ENCODE measurements at regions of chr3 and their contacts with region 1.

Region 1: DNA sequence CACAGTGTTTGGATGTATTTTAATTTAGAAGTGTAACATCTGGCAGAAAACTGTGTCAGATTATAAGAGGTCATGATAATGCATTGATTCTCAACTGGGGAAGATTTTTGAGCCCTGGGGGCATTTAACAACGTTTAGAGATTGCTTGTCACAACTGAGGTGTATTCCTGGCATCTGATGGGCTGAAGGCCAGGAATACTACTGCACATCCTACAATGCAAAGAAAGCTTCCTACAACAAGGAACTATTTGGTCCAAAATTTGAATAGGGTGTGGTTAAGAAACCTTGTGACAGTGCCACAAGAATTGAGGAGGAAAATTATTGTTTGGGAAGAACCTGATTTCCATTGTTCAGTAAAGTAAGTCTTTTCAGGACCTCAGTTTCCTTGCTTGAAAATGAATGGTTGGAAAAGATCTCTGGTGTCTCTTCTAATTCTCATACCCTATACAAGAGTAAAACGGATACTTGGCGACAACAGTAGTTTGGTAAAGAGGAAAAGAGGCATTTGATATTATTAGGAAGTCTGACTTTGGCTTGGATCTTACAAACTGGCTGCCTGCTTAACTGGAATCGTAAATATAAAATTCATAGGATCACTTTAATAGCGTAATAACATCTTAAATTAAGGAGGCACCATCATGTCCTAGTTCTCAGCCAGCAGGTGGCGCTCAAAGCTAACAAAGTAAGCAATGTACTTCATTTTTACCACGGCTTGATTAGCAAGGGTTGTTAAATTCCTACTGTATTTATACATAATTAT is 4.3 kb downstream of the DAZL start:
- DNase-seq: peak; percentile 85
- ATAC-seq: peak; percentile 51
- H3K4me3 ChIP-seq: no peak overlapping the region
- H3K4me3 Mint-ChIP-seq: no peak overlapping the region
- H3K27ac ChIP-seq: no peak overlapping the region
- H3K27ac Mint-ChIP-seq: no peak overlapping the region
- H3K4me1 ChIP-seq: peaks cover 3% of the 10 kb centered on the region in 2 donors
- H3K4me1 Mint-ChIP-seq: peaks cover 2% of the 10 kb centered on the region
- H3K27me3 ChIP-seq: peaks cover 0 to 2% (median 0%) of the 10 kb centered on the region in 4 experiments
- H3K27me3 Mint-ChIP-seq: peaks cover 5% of the 10 kb centered on the region
- CTCF ChIP-seq: peak; percentile 93

Region 2: DNA sequence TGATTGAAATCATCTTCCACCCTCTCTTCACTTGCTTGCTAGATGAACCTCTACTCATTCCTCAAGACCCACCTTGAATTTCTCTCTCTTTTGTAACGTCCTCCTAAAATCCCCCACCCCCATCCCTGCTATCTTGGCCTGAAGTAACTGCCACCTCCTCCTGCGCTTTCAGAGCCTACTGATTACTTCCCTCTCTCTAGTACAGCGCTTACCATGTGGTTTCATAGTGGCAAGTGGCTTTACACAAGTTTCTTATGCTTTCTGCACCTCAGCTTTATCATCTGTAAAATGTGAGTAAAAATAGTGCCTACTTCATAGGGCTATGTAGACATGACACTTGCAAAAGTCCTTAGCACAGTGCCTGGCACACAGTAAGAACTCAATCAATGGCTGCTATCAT is 33.0 kb after region 1 on chr3:
- CTCF ChIA-PET with region 1: no interaction called
- POLR2A ChIA-PET with region 1: no interaction called
- intact Hi-C with region 1: no loop called
- DNase-seq: no peak
- ATAC-seq: no peak
- H3K4me3 ChIP-seq: no peak overlapping the region
- H3K4me3 Mint-ChIP-seq: no peak overlapping the region
- H3K27ac ChIP-seq: no peak overlapping the region
- H3K27ac Mint-ChIP-seq: no peak overlapping the region
- H3K4me1 ChIP-seq: no peaks in the 10 kb centered on the region
- H3K4me1 Mint-ChIP-seq: peaks cover 4% of the 10 kb centered on the region
- H3K27me3 ChIP-seq: no peaks in the 10 kb centered on the region
- H3K27me3 Mint-ChIP-seq: no peaks in the 10 kb centered on the region
- CTCF ChIP-seq: no peak

Region 3: GRCh38 chr3:16828815-16829214 is 227.9 kb after region 1 on chr3:
- CTCF ChIA-PET with region 1: interaction called, 25 read pairs
- POLR2A ChIA-PET with region 1: no interaction called
- intact Hi-C with region 1: loop called (anchors 5 kb)
- DNase-seq: peak; percentile 71
- ATAC-seq: peak; percentile 60
- H3K4me3 ChIP-seq: no peak overlapping the region
- H3K4me3 Mint-ChIP-seq: no peak overlapping the region
- H3K27ac ChIP-seq: no peak overlapping the region
- H3K27ac Mint-ChIP-seq: no peak overlapping the region
- H3K4me1 ChIP-seq: peaks cover 11 to 12% of the 10 kb centered on the region in 2 donors
- H3K4me1 Mint-ChIP-seq: peaks cover 15% of the 10 kb centered on the region
- H3K27me3 ChIP-seq: no peaks in the 10 kb centered on the region
- H3K27me3 Mint-ChIP-seq: no peaks in the 10 kb centered on the region
- CTCF ChIP-seq: peak; percentile 62

Region 4: GRCh38 chr3:17032407-17033034 is 431.6 kb after region 1 on chr3:
- CTCF ChIA-PET with region 1: interaction called, 4 read pairs
- POLR2A ChIA-PET with region 1: no interaction called
- intact Hi-C with region 1: loop called (anchors 2 kb)
- DNase-seq: peak; percentile 19
- ATAC-seq: peak; percentile 28
- H3K4me3 ChIP-seq: no peak overlapping the region
- H3K4me3 Mint-ChIP-seq: no peak overlapping the region
- H3K27ac ChIP-seq: no peak overlapping the region
- H3K27ac Mint-ChIP-seq: no peak overlapping the region
- H3K4me1 ChIP-seq: peaks cover 17 to 25% of the 10 kb centered on the region in 2 donors
- H3K4me1 Mint-ChIP-seq: peaks cover 39% of the 10 kb centered on the region
- H3K27me3 ChIP-seq: no peaks in the 10 kb centered on the region
- H3K27me3 Mint-ChIP-seq: no peaks in the 10 kb centered on the region
- CTCF ChIP-seq: peak; percentile 24

Region 5: DNA sequence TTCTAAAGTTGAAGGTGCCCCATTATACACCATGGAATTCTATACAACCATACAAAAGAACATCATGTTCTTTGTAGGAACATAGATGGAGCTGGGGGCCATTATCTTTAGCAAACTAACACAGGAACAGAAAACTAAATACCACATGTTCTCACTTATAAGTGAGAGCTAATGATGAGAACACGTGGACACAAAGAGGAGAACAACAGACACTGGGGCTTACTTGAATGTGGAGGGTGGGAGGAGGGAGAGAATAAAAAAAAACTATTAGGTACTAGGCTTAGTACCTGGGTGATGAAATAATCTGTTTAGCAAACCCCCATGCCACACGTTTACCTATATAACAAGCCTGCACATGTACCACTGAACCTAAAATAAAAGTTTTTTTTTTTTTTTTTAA is 626.5 kb after region 1 on chr3:
- CTCF ChIA-PET with region 1: interaction called, 139 read pairs
- POLR2A ChIA-PET with region 1: no interaction called
- intact Hi-C with region 1: no loop called
- DNase-seq: no peak
- ATAC-seq: no peak
- H3K4me3 ChIP-seq: no peak overlapping the region
- H3K4me3 Mint-ChIP-seq: no peak overlapping the region
- H3K27ac ChIP-seq: no peak overlapping the region
- H3K27ac Mint-ChIP-seq: no peak overlapping the region
- H3K4me1 ChIP-seq: peaks cover 4 to 12% of the 10 kb centered on the region in 2 donors
- H3K4me1 Mint-ChIP-seq: peaks cover 15% of the 10 kb centered on the region
- H3K27me3 ChIP-seq: no peaks in the 10 kb centered on the region
- H3K27me3 Mint-ChIP-seq: no peaks in the 10 kb centered on the region
- CTCF ChIP-seq: no peak

Region 6: DNA sequence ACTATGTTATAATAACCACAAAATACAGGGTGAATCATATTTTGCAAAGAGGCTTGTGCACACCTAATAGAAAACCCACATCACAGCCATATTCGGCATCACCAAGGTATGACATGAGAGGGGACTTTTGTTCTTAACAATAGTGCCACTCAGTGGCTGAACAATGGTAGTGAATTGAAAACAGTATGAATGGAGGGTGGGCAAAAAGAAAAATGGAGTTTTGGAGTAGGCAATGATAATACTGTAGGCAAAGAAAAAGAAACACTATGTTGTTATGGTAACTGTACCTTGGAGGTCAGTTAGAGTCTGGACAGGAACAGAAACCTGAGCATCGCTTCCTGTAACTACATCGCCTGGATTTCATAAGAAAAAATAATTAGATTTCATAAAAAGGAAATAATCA is 632.4 kb after region 1 on chr3:
- CTCF ChIA-PET with region 1: interaction called, 139 read pairs
- POLR2A ChIA-PET with region 1: no interaction called
- intact Hi-C with region 1: loop called (anchors 1 kb)
- DNase-seq: peak; percentile 71
- ATAC-seq: peak; percentile 97
- H3K4me3 ChIP-seq: no peak overlapping the region
- H3K4me3 Mint-ChIP-seq: no peak overlapping the region
- H3K27ac ChIP-seq: no peak overlapping the region
- H3K27ac Mint-ChIP-seq: no peak overlapping the region
- H3K4me1 ChIP-seq: peaks cover 4 to 13% of the 10 kb centered on the region in 2 donors
- H3K4me1 Mint-ChIP-seq: peaks cover 20% of the 10 kb centered on the region
- H3K27me3 ChIP-seq: no peaks in the 10 kb centered on the region
- H3K27me3 Mint-ChIP-seq: no peaks in the 10 kb centered on the region
- CTCF ChIP-seq: peak; percentile 86

Region 7: GRCh38 chr3:17412950-17413530 is 812.1 kb after region 1 on chr3:
- CTCF ChIA-PET with region 1: interaction called, 24 read pairs
- POLR2A ChIA-PET with region 1: no interaction called
- intact Hi-C with region 1: loop called (anchors 1 kb)
- DNase-seq: peak; percentile 67
- ATAC-seq: no peak
- H3K4me3 ChIP-seq: no peak overlapping the region
- H3K4me3 Mint-ChIP-seq: no peak overlapping the region
- H3K27ac ChIP-seq: no peak overlapping the region
- H3K27ac Mint-ChIP-seq: no peak overlapping the region
- H3K4me1 ChIP-seq: no peaks in the 10 kb centered on the region
- H3K4me1 Mint-ChIP-seq: no peaks in the 10 kb centered on the region
- H3K27me3 ChIP-seq: no peaks in the 10 kb centered on the region
- H3K27me3 Mint-ChIP-seq: no peaks in the 10 kb centered on the region
- CTCF ChIP-seq: peak; percentile 83